Calu3 (cell line): ENCODE measurements at regions of chr9 and their contacts with region 1.

Region 1: DNA sequence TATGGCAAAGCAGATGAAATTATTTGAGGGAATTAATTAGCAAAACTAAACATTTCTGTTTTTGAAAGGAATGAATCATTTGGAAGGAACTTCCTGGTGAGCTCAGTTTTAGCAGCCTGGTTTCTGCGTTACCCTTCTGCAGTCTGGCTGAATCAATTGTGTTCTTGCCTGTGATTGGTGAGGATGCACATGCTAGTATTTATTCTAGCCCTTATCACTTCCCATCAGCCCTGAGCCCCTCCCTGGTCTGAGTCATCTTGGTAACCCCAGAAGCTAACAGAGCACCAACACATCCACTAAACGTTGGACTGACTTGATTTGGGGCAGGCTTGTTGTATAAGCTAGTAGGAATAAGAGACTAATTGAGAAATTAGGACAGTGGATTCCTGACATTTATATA is 6.6 kb downstream of the TJP2 start:
- DNase-seq: peak; percentile 79
- H3K4me3 Mint-ChIP-seq: peak overlapping the region; percentile 46
- H3K27ac Mint-ChIP-seq: peak overlapping the region; percentile 93
- H3K4me1 Mint-ChIP-seq: peaks cover 54% of the 10 kb centered on the region
- H3K27me3 Mint-ChIP-seq: no peaks in the 10 kb centered on the region
- CTCF ChIP-seq: no peak

Region 2: DNA sequence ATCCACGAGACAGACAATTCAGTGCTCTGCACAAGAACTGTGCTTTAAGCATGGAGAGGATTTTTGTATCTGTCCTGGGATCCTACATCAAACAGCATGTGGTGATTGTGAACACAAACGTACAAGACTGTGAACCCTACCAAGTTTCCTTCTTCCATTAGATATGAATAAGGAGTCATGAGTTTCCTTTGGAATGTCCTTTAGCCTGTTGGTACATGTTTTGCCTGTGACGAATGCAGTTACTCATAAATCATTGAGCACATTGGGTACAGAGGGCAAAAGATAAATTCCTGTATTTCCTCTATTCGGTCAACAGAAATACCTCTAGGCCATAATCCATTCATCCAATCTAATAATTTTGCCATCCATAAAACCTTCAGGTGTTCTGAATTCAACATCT is 83.6 kb before region 1 on chr9:
- CTCF ChIA-PET with region 1: interaction called, 15 read pairs
- intact Hi-C with region 1: no loop called
- DNase-seq: no peak
- H3K4me3 Mint-ChIP-seq: peak overlapping the region; percentile 59
- H3K27ac Mint-ChIP-seq: peak overlapping the region; percentile 72
- H3K4me1 Mint-ChIP-seq: peaks cover 43% of the 10 kb centered on the region
- H3K27me3 Mint-ChIP-seq: no peaks in the 10 kb centered on the region
- CTCF ChIP-seq: no peak

Region 3: DNA sequence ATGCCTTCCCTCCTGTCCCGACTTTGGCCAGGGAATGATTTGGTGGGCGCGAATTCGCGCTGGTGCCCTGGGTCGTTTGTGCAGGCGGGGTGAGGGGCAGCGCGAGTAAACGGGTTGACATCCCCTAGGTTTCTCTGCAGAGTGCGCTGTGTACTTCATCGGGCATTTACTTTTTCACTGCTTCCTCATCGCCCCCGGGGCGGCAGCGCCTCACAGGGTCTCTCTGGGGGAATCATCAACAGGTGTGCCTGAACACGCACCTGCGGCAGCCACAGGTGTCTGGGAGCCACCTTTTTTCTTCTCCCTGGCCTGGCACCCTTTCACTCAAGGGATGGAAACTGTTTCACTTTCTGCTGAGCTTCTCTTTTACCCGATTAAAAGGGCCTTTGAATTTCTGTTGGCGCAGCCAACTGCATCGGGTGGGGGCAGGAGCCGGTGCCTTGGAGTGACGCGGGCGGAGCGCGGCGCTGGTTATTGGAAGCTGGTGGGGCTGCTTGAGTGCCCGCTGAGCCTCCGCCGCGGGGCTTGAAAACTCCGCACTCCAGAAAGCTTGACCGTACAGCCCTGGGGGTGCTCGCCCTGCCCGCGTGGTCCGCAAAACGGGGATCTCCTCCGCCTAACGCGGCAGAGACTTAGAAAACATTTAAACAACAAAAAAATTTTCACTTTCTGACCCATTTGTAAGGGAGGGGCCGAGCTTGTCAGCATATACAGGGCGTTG is 58.7 kb before region 1 on chr9:
- CTCF ChIA-PET with region 1: no interaction called
- intact Hi-C with region 1: loop called (anchors 5 kb)
- DNase-seq: peak; percentile 52
- H3K4me3 Mint-ChIP-seq: peak overlapping the region; percentile 80
- H3K27ac Mint-ChIP-seq: peak overlapping the region; percentile 91
- H3K4me1 Mint-ChIP-seq: peaks cover 8% of the 10 kb centered on the region
- H3K27me3 Mint-ChIP-seq: no peaks in the 10 kb centered on the region
- CTCF ChIP-seq: no peak